Activated T-helper 2 cell treated with anti-CD3 and anti-CD28 coated beads, Interferon-gamma antibody, Interleukin-2, Interleukin-4, amounts not matched to agents 10 μg/mL and 5 μg/mL and 100 μg/mL, durations not matched to agents 14 hours and 24 hours and 36 hours (primary cell): ENCODE measurements at regions of chr11 and their contacts with region 1.

Region 1: DNA sequence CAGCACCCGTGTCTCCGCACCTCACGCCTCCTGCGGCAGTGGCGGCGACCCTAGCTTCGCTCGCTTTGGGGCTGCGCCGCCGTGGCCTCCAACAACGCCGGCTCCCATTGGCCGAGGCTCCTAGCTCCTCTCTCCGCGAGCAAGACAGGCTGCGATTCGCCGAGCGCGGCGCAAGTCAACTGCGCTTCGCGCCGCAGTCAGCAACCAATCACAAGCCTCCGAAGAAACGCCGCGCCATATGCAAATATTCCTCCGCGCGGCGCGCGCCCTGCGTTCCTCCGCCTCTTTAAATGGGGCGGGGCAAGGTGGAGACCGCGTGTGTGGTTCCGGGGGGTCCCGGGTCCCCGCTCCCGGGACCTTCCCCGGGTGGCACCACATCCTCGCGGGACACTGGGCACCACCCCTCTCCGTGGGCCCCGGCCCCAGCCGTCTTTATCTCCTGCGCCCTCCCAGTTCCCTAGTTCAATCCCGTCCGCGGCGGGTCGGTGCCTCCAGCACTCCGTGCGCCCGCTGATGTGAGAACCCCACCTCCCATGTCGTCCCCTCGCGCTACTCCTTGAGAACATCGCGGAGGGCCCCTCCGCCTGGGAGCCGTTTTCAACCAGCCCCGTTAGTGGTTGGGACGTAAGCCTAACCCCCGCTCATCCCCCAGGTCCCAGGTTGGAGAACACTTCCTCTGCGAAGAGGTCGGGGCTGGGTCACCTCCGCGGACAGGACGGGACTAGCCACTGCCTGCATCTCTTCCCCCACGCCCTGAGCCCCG is at the start of gene NAP1L4:
- DNase-seq: peak; percentile 96
- H3K4me3 Mint-ChIP-seq: peak within 1 kb of the TSS; percentile 100
- H3K27ac Mint-ChIP-seq: peak within 1 kb of the TSS; percentile 99
- H3K4me1 Mint-ChIP-seq: peaks cover 25% of the 10 kb centered on the region
- H3K27me3 Mint-ChIP-seq: no peaks in the 10 kb centered on the region
- total RNA-seq, gene NAP1L4: 267 and 286 TPM in 2 replicates

Region 2: GRCh38 chr11:2930704-2931428 is 61.5 kb before region 1 on chr11:
- intact Hi-C with region 1: loop called (anchors 2 kb)
- DNase-seq: no peak
- H3K4me3 Mint-ChIP-seq: peak overlapping the region; percentile 82
- H3K27ac Mint-ChIP-seq: peak overlapping the region; percentile 92
- H3K4me1 Mint-ChIP-seq: peaks cover 24% of the 10 kb centered on the region
- H3K27me3 Mint-ChIP-seq: peaks cover 15% of the 10 kb centered on the region

Region 3: GRCh38 chr11:2975594-2975993 is 16.8 kb before region 1 on chr11:
- intact Hi-C with region 1: loop called (anchors 1 kb)
- DNase-seq: no peak
- H3K4me3 Mint-ChIP-seq: no peak overlapping the region
- H3K27ac Mint-ChIP-seq: no peak overlapping the region
- H3K4me1 Mint-ChIP-seq: peaks cover 18% of the 10 kb centered on the region
- H3K27me3 Mint-ChIP-seq: no peaks in the 10 kb centered on the region

Region 4: GRCh38 chr11:3057069-3057963 is 64.9 kb after region 1 on chr11 and contains the start of gene CARS1:
- intact Hi-C with region 1: loop called (anchors 1 kb)
- DNase-seq: peak; percentile 92
- H3K4me3 Mint-ChIP-seq: peak within 1 kb of the TSS; percentile 82
- H3K27ac Mint-ChIP-seq: peak within 1 kb of the TSS; percentile 76
- H3K4me1 Mint-ChIP-seq: peaks cover 23% of the 10 kb centered on the region
- H3K27me3 Mint-ChIP-seq: no peaks in the 10 kb centered on the region
- total RNA-seq, gene CARS1: 46.4 and 51.8 TPM in 2 replicates

Region 5: DNA sequence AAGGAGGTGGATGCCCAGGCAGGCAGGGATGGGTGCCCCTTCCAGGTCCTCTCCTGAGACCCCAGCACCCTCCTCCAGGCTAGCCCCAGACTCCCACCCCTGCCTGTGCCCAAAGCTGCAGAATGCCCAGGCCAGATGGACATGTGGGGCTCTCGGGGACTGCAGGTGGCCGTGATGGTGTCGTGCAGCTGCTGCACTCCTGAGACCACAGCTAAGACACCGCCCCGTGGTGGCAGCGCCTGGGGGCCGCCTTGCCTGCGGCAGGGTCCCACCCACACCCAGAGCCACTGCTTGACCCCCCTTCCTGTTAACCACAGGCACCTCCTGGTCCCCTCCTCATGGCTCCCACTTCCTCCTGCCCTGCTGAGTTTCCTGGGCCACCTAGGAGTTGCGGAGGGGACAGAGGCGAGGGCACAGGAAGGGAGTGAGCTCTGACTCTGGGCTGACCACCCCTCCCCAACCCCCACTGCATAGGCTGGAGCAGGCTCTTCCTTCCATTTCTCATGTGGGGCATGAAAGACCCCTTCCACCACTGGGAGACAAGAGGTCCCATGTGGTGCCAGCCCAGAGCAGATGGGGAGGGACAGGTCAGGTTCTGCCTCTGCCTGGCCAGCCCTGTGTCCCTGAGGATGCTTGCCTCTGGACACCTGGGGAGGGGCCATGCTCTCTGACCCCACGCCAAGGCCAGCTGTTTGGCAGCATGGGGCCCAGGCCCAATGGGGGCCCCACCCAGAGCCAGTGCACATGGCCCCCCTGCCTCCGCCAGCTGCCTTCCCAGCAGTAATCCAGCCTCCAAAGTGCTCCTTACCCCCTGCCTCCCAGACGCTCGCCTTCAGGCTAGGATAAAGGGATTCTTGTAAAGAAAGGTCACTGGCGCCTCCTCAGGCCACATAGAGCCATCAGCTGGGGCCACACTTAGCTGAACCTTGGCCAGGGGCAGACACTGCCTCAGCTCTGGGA is 143.3 kb after region 1 on chr11:
- intact Hi-C with region 1: no loop called
- DNase-seq: no peak
- H3K4me3 Mint-ChIP-seq: no peak overlapping the region
- H3K27ac Mint-ChIP-seq: no peak overlapping the region
- H3K4me1 Mint-ChIP-seq: no peaks in the 10 kb centered on the region
- H3K27me3 Mint-ChIP-seq: no peaks in the 10 kb centered on the region